Endothelial cell of umbilical vein (primary cell): ENCODE measurements at regions of chr3 and their contacts with region 1.

Region 1: GRCh38 chr3:118564800-118565199 is 469.8 kb downstream of the IGSF11 start:
- DNase-seq: no peak
- H3K4me3 ChIP-seq: no peak overlapping the region
- H3K27ac ChIP-seq: no peak overlapping the region
- H3K4me1 ChIP-seq: no peaks in the 10 kb centered on the region
- H3K27me3 ChIP-seq: no peaks in the 10 kb centered on the region
- CTCF ChIP-seq: no peak
- POLR2A ChIP-seq: no peak

Region 2: GRCh38 chr3:116896116-116896515 is 1668.7 kb before region 1 on chr3:
- CTCF ChIA-PET with region 1: no interaction called
- POLR2A ChIA-PET with region 1: no interaction called
- dilution Hi-C with region 1: no loop called
- intact Hi-C with region 1: loop called (anchors 10 kb)
- DNase-seq: no peak
- H3K4me3 ChIP-seq: no peak overlapping the region
- H3K27ac ChIP-seq: no peak overlapping the region
- H3K4me1 ChIP-seq: no peaks in the 10 kb centered on the region
- H3K27me3 ChIP-seq: no peaks in the 10 kb centered on the region
- CTCF ChIP-seq: no peak
- POLR2A ChIP-seq: no peak